HepG2 (cell line): ENCODE measurements at regions of chr6 and their contacts with region 1.

Region 1: GRCh38 chr6:158399040-158399700 is 86.9 kb downstream of the TULP4 start:
- DNase-seq: no peak
- ATAC-seq: no peak
- H3K4me3 ChIP-seq: no peak overlapping the region
- H3K27ac ChIP-seq: no peak overlapping the region
- H3K4me1 ChIP-seq: peaks cover 19% of the 10 kb centered on the region
- H3K27me3 ChIP-seq: no peaks in the 10 kb centered on the region
- CTCF ChIP-seq: no peak
- EP300 ChIP-seq: no peak
- POLR2A ChIP-seq: no peak
- RAD21 ChIP-seq: no peak

Region 2: GRCh38 chr6:158242071-158242606 is 157.0 kb before region 1 on chr6:
- CTCF ChIA-PET with region 1: no interaction called
- POLR2A ChIA-PET with region 1: no interaction called
- in situ Hi-C with region 1: no loop called
- intact Hi-C with region 1: loop called (anchors 5 kb)
- DNase-seq: peak; percentile 21
- ATAC-seq: peak; percentile 72
- H3K4me3 ChIP-seq: peak overlapping the region in 1 of 3 experiments; percentile 12; a peak in 1 of 6 replicates
- H3K27ac ChIP-seq: peak overlapping the region; percentile 41
- H3K4me1 ChIP-seq: peaks cover 42% of the 10 kb centered on the region
- H3K27me3 ChIP-seq: no peaks in the 10 kb centered on the region
- CTCF ChIP-seq: no peak
- EP300 ChIP-seq: no peak
- POLR2A ChIP-seq: no peak
- RAD21 ChIP-seq: no peak